ENCODE measurements at regions of chr14 and their contacts with region 1.

Region 1: DNA sequence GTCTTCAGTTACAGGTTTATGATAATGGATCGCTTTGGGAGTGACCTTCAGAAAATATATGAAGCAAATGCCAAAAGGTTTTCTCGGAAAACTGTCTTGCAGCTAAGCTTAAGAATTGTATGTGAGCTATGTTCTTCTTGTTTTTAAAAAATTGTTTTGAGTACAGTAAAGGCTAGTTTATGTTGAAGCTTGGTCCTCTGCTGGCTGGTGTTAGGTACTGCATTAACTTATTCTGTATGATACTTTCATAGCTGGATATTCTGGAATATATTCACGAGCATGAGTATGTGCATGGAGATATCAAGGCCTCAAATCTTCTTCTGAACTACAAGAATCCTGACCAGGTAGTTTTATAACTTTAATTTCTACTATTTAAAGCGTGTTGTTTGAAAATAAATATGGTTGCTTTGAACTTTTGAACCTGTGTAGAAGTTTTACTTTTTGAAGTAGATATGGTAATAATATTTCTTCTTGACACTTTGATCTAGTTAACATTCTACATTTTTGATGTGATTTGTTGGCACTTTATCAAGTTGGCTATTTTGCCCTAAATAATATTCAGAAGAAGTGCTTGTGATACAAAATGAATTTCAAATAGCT is 55.7 kb downstream of the VRK1 start:
- DNase-seq: peak; percentile 2
- H3K4me3 ChIP-seq: no peak overlapping the region
- H3K27me3 ChIP-seq: no peaks in the 10 kb centered on the region
- CTCF ChIP-seq: peak; percentile 80

Region 2: DNA sequence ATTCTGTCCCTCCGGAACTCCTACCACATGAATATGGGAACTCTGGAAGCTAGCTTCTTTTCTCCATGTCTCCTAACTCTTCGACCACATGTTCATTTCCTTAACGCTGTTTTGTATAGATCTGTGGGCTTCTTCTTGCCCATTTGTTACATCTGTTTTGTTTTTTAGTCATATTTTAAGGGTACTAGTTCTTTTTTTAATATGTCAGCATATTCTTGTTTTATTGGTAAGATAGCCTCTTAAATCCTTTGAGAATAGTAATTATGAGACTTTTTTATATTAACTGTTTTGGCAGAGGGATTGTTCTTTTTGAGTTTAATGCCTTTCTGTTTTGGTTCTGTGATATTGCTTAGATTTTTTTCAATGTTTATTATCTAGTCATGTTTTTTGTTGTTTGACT is 14.7 kb after region 1 on chr14:
- CTCF ChIA-PET with region 1: interaction called, 14 read pairs
- POLR2A ChIA-PET with region 1: no interaction called
- DNase-seq: no peak
- H3K4me3 ChIP-seq: no peak overlapping the region
- H3K27me3 ChIP-seq: no peaks in the 10 kb centered on the region
- CTCF ChIP-seq: no peak